Natural killer cell (primary cell): ENCODE measurements at regions of chr1 and their contacts with region 1.

Region 1: DNA sequence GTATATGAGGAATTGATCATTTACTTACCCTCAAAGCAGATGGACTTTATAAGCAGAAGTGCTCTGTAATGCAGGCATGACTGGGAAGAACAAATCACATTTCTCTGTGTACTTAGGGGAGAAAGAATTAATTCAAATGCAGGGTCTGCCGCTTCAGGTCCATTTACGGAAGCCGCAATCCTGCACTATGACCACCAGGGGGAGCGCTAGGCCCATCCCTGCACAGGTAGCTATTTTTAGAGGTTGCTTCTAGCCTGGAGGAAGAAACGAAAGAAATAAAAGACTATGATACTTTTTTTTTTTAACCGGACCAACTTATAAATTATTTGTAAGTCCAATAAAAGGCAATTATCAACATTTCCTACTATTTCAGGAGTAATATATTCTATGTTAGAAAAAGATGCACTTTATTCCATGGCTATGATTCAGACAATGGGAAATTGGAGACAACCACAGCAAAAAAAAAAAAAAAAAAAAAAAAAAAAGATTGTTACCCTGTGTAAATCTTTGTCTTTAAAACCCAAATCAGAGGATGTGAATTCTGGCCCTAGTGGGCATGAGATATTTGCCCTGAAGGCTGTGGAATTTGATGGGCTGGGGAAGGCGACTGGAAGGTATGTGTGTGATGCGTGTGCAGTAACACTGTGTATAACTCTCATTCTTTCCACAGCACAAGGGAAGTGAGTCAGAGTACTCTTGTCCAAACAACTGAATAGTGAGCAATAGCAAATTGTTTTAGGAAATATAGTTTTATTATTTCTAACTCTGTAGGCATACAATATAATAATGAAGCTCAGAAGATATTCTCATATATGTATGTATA is 12.9 kb upstream of the FYB2 start:
- DNase-seq: peak; percentile 67 to 84
- ATAC-seq: peak; percentile 77 to 83 (median 80)
- H3K4me3 ChIP-seq: no peak overlapping the region
- H3K4me3 Mint-ChIP-seq: peak overlapping the region; percentile 72
- H3K27ac ChIP-seq: no peak overlapping the region
- H3K27ac Mint-ChIP-seq: peak overlapping the region in 1 of 2 donors; percentile 74
- H3K4me1 ChIP-seq: peaks cover 5% of the 10 kb centered on the region
- H3K4me1 Mint-ChIP-seq: peaks cover 19 to 42% of the 10 kb centered on the region in 2 donors
- H3K27me3 ChIP-seq: no peaks in the 10 kb centered on the region
- H3K27me3 Mint-ChIP-seq: peaks cover 15 to 21% of the 10 kb centered on the region in 2 donors
- CTCF ChIP-seq: peak; percentile 99

Region 2: DNA sequence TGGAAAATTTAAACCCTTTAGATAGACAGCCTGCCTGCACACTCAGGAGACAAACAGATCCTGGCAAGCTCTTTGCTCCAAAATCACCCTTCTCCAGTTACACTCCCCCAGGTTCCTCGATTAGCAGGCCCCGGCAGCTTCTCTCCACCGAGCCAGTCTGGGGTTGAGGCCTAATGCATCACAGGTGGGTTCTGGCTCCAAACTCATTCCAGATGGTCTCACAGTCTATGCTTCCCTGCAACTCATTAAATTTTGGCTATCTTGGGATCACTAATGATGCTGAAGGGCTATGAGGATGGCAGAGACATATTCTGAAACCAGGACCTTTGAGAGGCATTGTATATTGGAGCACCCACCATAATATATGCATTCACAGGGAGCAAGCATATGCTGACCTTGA is 1057.1 kb before region 1 on chr1:
- intact Hi-C with region 1: no loop called
- DNase-seq: no peak
- ATAC-seq: no peak
- H3K4me3 ChIP-seq: no peak overlapping the region
- H3K4me3 Mint-ChIP-seq: no peak overlapping the region
- H3K27ac ChIP-seq: no peak overlapping the region
- H3K27ac Mint-ChIP-seq: no peak overlapping the region
- H3K4me1 ChIP-seq: no peaks in the 10 kb centered on the region
- H3K4me1 Mint-ChIP-seq: no peaks in the 10 kb centered on the region
- H3K27me3 ChIP-seq: no peaks in the 10 kb centered on the region
- H3K27me3 Mint-ChIP-seq: peaks cover 0 to 8% of the 10 kb centered on the region in 2 donors
- CTCF ChIP-seq: no peak

Region 3: DNA sequence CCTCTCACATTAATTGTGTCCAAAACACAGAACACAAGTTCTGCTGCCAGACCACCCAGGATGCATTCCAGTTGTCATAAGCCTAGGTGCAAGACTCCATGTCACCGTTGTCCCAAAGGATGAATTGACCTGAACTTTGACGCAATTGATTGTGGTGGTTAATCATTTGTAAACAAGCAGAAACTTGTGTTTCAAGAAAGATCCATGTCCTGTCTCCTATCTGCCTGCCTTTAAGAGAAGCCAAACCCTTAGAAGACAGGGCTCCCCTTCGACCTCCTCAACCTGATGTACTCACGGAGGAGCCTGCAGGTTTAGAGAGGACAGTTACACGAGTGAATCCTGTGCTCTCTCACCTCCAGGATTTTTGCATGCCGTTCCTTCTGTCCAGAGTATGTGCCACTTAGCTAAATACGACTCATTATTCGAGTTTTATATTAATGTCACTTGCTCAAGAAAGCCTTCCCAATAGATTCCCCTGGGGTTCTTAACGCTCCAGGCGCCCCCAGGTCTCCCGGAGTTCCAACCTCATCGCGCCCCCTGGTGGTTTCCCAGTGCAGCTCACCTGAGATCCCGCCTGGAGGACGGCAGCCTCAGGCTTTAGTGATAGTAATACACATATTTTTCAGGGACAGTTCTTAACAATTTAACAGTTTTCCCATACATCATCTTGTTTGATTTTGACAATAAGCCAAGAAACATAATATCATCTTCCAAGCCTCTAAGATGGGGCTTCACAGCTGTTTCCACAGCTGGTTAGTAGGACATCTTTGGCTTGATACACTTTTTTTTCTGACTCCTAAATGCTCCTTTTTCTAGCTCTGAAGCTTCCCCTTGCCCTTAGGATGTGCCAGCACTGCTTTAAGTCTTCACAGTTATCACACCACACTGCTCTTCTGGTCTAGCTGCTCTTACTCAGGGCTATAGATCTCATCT is 136.1 kb after region 1 on chr1:
- intact Hi-C with region 1: loop called (anchors 2 kb)
- DNase-seq: no peak
- ATAC-seq: no peak
- H3K4me3 ChIP-seq: no peak overlapping the region
- H3K4me3 Mint-ChIP-seq: no peak overlapping the region
- H3K27ac ChIP-seq: no peak overlapping the region
- H3K27ac Mint-ChIP-seq: no peak overlapping the region
- H3K4me1 ChIP-seq: no peaks in the 10 kb centered on the region
- H3K4me1 Mint-ChIP-seq: peaks cover 0 to 11% of the 10 kb centered on the region in 2 donors
- H3K27me3 ChIP-seq: no peaks in the 10 kb centered on the region
- H3K27me3 Mint-ChIP-seq: peaks cover 0 to 7% of the 10 kb centered on the region in 2 donors
- CTCF ChIP-seq: no peak

Region 4: DNA sequence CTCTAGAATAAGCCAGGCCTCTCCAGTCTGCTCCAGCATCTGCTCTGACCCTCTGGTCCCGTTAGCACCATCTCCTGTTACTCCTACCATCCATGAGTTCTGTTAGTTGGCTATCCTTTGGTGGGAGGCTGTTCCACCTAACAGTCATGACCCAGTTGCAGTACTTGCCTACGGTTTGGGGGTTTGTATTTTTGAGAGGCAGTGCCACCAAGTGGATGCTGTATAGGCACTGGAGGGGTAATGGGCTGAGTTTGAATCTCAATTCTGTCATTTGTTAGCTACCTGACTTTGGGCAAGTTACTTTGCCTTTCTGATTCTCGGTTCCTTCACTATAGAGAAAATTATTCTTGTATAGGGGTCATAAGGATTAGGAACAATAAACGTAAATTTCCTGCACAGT is 145.8 kb after region 1 on chr1:
- intact Hi-C with region 1: loop called (anchors 2 kb)
- DNase-seq: no peak
- ATAC-seq: no peak
- H3K4me3 ChIP-seq: no peak overlapping the region
- H3K4me3 Mint-ChIP-seq: no peak overlapping the region
- H3K27ac ChIP-seq: no peak overlapping the region
- H3K27ac Mint-ChIP-seq: no peak overlapping the region
- H3K4me1 ChIP-seq: peaks cover 17% of the 10 kb centered on the region
- H3K4me1 Mint-ChIP-seq: peaks cover 22 to 25% of the 10 kb centered on the region in 2 donors
- H3K27me3 ChIP-seq: no peaks in the 10 kb centered on the region
- H3K27me3 Mint-ChIP-seq: peaks cover 5 to 12% of the 10 kb centered on the region in 2 donors
- CTCF ChIP-seq: no peak

Region 5: GRCh38 chr1:58047265-58047858 is 1215.3 kb after region 1 on chr1:
- intact Hi-C with region 1: loop called (anchors 5 kb)
- DNase-seq: peak in 1 of 2 donors; percentile 28
- ATAC-seq: peak in 1 of 3 donors; percentile 45
- H3K4me3 ChIP-seq: no peak overlapping the region
- H3K4me3 Mint-ChIP-seq: no peak overlapping the region
- H3K27ac ChIP-seq: no peak overlapping the region
- H3K27ac Mint-ChIP-seq: no peak overlapping the region
- H3K4me1 ChIP-seq: no peaks in the 10 kb centered on the region
- H3K4me1 Mint-ChIP-seq: no peaks in the 10 kb centered on the region
- H3K27me3 ChIP-seq: no peaks in the 10 kb centered on the region
- H3K27me3 Mint-ChIP-seq: no peaks in the 10 kb centered on the region
- CTCF ChIP-seq: peak; percentile 43

Region 6: GRCh38 chr1:58546520-58547308 is 1714.6 kb after region 1 on chr1 and contains the start of gene OMA1:
- intact Hi-C with region 1: loop called (anchors 1 kb)
- DNase-seq: peak; percentile 98 to 99
- ATAC-seq: peak; percentile 91 to 99 (median 92)
- H3K4me3 ChIP-seq: peak within 1 kb of the TSS; percentile 53
- H3K4me3 Mint-ChIP-seq: peak within 1 kb of the TSS; percentile 94
- H3K27ac ChIP-seq: peak within 1 kb of the TSS; percentile 99
- H3K27ac Mint-ChIP-seq: peak within 1 kb of the TSS; percentile 93 to 98
- H3K4me1 ChIP-seq: peaks cover 10% of the 10 kb centered on the region
- H3K4me1 Mint-ChIP-seq: peaks cover 19 to 34% of the 10 kb centered on the region in 2 donors
- H3K27me3 ChIP-seq: no peaks in the 10 kb centered on the region
- H3K27me3 Mint-ChIP-seq: peaks cover 5 to 17% of the 10 kb centered on the region in 2 donors
- CTCF ChIP-seq: peak; percentile 88
- total RNA-seq, gene OMA1: 27.2 to 41.1 (median 31.2) TPM